Lower lobe of right lung (tissue), 2 donors: ENCODE measurements at regions of chr6 and their contacts with region 1.

Region 1: GRCh38 chr6:43769526-43770416 is at the start of gene VEGFA:
- DNase-seq: peak; percentile 93
- ATAC-seq: peak; percentile 85
- H3K4me3 ChIP-seq: peak within 1 kb of the TSS; percentile 91
- H3K27ac ChIP-seq: peak within 1 kb of the TSS; percentile 92
- H3K4me1 ChIP-seq: peaks cover 39% of the 10 kb centered on the region
- H3K27me3 ChIP-seq: no peaks in the 10 kb centered on the region
- CTCF ChIP-seq: peak; percentile 95
- total RNA-seq, gene VEGFA: 196 TPM

Region 2: DNA sequence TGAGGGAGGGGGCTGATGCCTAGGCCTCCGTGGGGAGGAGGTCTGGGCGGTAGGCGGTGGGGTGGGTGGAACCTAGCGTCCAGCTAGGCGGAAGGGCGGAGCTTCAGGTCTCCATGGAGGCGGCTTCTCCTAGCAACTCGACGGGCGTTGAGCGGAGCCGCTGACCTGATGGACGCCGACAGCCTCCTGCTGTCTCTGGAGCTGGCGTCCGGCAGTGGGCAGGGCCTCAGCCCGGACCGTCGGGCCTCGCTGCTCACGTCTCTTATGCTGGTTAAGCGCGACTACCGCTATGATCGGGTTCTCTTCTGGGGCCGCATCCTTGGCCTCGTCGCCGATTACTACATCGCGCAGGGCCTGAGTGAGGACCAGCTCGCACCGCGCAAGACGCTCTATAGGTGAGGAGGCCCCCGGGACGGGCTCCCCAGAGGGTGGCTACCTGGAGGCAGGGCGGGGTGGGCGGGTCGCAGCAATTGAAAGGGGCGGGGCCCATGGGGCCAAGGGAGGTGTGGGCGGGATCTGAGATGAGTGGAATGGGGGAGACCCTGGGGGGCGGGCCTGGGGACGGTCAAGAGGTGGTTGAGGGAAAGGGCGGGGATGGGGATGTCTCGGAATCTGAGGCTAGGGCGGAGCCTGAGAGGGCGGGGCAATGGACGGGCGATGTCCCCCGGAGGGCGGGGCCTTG is 124.7 kb before region 1 on chr6 and contains the start of gene RSPH9:
- intact Hi-C with region 1: no loop called
- DNase-seq: peak; percentile 84
- ATAC-seq: peak; percentile 89 to 91
- H3K4me3 ChIP-seq: peak within 1 kb of the TSS; percentile 61
- H3K27ac ChIP-seq: peak within 1 kb of the TSS; percentile 62
- H3K4me1 ChIP-seq: peaks cover 15% of the 10 kb centered on the region
- H3K27me3 ChIP-seq: no peaks in the 10 kb centered on the region
- CTCF ChIP-seq: no peak
- total RNA-seq, gene RSPH9: 2.6 TPM

Region 3: DNA sequence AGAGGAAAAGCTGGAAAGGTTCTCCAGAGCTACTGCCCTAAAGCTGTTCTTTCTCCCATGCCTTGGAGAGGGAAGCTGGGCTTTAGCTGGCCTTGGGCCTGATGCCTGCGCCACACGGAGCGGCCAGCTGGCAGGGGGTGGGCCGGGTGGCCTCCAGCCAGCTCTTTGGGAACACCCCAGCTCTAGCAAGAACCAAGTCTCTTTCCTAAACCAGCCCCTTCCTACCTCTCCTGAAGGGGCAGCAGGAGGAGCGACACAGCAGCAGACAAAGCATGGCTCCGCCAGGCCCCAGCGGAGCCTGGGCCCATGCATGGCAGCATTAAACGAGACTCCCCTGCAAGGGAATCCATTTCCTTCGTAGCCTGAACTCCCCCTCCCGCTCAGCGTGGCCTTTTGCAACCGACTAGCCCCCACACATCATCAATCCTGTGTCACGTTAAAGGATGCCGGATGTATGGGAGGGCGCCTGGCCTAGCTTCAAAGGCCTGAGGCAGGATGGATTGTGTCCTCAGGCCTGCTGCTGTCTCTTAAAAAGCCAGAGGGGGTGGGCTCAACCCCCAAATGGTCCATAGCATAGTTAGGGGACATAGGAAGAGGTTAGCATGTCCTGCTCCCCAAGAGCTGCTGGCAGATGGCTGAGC is 96.2 kb before region 1 on chr6:
- intact Hi-C with region 1: no loop called
- DNase-seq: no peak
- ATAC-seq: peak in 1 of 2 donors; percentile 3
- H3K4me3 ChIP-seq: no peak overlapping the region
- H3K27ac ChIP-seq: peak overlapping the region; percentile 61
- H3K4me1 ChIP-seq: peaks cover 36% of the 10 kb centered on the region
- H3K27me3 ChIP-seq: no peaks in the 10 kb centered on the region
- CTCF ChIP-seq: no peak

Region 4: DNA sequence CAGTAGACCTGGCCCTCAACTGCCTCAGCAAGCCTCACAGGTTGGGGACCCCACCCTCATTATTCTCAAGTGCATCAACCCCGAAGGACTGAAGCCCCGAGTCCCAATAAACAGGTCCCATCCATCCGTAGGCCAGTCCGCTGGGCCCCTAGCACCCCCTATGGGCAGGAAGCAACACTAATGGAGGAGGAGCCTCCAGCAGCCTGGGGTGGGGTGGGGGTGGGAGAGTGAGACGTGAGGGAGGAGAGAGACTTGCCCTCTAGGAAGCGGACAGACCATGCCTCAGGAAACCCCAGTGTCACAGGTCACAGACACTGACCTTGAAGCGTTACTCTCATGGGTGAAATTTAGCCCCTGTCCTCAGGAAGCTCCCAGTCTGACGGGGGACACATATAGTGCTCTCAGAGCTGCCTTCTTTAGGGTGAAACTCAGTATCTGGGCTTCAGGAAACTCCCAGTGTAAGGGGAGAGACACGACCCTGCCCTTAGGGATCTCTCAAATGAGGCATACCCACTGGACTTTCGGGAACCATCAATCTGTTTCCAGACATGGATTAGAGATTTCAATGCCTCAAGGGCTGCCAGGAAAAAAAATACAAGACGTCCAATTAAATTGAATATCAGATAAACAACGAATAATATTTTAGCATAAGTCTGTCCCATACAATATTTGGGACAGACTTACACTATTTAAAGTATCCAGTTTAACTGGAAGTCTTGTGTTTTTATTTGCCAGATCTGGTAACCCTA is 231.7 kb after region 1 on chr6:
- intact Hi-C with region 1: no loop called
- DNase-seq: peak; percentile 68
- ATAC-seq: peak; percentile 74 to 80
- H3K4me3 ChIP-seq: peak overlapping the region; percentile 44
- H3K27ac ChIP-seq: peak overlapping the region; percentile 74
- H3K4me1 ChIP-seq: peaks cover 14% of the 10 kb centered on the region
- H3K27me3 ChIP-seq: peaks cover 42% of the 10 kb centered on the region
- CTCF ChIP-seq: peak; percentile 26

Region 5: DNA sequence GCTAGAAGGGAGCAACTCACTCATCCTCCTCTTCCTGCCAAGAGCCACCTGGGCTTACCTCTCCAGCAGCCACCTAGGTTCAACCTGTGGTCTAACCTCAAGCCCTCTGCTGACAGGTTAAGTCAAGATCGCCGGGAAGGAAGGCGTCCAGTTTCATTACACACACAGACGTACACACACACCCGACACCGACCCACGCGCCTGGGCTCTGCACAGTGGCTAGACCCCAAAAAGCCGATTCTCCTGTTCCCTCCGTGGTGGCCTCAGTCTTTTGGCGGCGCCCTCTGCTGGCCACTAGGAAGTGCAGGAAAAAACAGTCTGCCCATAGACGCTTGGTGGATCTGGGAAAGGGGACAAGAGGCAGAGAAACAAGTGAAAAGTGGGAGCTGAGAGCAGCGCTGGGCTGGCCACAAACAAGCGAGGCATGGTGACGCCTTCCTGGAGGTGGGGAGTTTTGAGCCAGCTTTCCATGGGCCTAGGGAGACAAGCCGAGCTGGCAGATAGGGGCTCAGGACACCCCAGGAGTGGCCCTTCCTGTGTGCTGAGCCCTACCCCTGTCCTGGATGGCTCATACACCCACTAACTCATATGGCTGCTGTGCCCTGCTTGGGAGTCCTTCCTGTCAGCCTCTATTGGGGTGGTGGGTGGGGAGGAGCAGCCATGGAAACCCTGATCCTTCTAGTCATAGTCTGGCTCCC is 304.8 kb after region 1 on chr6:
- intact Hi-C with region 1: loop called (anchors 10 kb)
- DNase-seq: peak; percentile 81
- ATAC-seq: peak; percentile 75 to 77
- H3K4me3 ChIP-seq: no peak overlapping the region
- H3K27ac ChIP-seq: no peak overlapping the region
- H3K4me1 ChIP-seq: peaks cover 36% of the 10 kb centered on the region
- H3K27me3 ChIP-seq: peaks cover 14% of the 10 kb centered on the region
- CTCF ChIP-seq: peak; percentile 93